ENCODE measurements at regions of chr3 and their contacts with region 1.

Region 1: GRCh38 chr3:122609798-122610559 is 32.5 kb downstream of the PARP15 start:
- DNase-seq: no peak
- ATAC-seq: peak; percentile 80
- H3K4me3 ChIP-seq: no peak overlapping the region
- H3K4me3 Mint-ChIP-seq: peak overlapping the region; percentile 73
- H3K27ac ChIP-seq: peak overlapping the region in 1 of 2 donors; percentile 78
- H3K27ac Mint-ChIP-seq: peak overlapping the region; percentile 86
- H3K4me1 ChIP-seq: peaks cover 8 to 15% of the 10 kb centered on the region in 2 donors
- H3K4me1 Mint-ChIP-seq: peaks cover 27% of the 10 kb centered on the region
- H3K27me3 ChIP-seq: no peaks in the 10 kb centered on the region
- H3K27me3 Mint-ChIP-seq: no peaks in the 10 kb centered on the region
- CTCF ChIP-seq: no peak

Region 2: GRCh38 chr3:122200661-122201060 is 409.3 kb before region 1 on chr3:
- CTCF ChIA-PET with region 1: no interaction called
- POLR2A ChIA-PET with region 1: no interaction called
- intact Hi-C with region 1: no loop called
- DNase-seq: no peak
- ATAC-seq: no peak
- H3K4me3 ChIP-seq: no peak overlapping the region
- H3K4me3 Mint-ChIP-seq: no peak overlapping the region
- H3K27ac ChIP-seq: no peak overlapping the region
- H3K27ac Mint-ChIP-seq: no peak overlapping the region
- H3K4me1 ChIP-seq: no peaks in the 10 kb centered on the region
- H3K4me1 Mint-ChIP-seq: no peaks in the 10 kb centered on the region
- H3K27me3 ChIP-seq: no peaks in the 10 kb centered on the region
- H3K27me3 Mint-ChIP-seq: no peaks in the 10 kb centered on the region
- CTCF ChIP-seq: no peak

Region 3: DNA sequence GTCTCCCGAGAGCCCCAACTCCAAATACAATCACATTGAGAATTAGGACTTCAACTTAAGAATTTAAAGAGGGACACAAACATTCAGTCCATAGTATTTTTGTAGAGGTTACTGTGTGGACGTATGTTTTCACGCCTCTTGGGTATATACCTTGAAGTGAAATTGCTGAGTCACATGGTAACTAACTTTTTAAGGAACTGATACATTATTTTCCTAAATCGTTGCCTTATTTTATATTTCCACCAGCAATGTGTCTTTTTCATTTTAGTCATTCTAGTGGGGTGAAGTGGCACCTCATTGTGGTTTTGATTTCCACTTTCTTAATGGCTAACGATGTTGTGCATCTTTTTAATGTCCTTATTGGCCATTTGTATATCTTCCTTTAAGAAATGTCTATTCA is 20.7 kb before region 1 on chr3:
- CTCF ChIA-PET with region 1: no interaction called
- POLR2A ChIA-PET with region 1: no interaction called
- intact Hi-C with region 1: loop called (anchors 2 kb)
- DNase-seq: peak; percentile 42
- ATAC-seq: peak; percentile 40
- H3K4me3 ChIP-seq: no peak overlapping the region
- H3K4me3 Mint-ChIP-seq: peak overlapping the region; percentile 46
- H3K27ac ChIP-seq: peak overlapping the region; percentile 22 to 76
- H3K27ac Mint-ChIP-seq: peak overlapping the region; percentile 85
- H3K4me1 ChIP-seq: peaks cover 36 to 40% of the 10 kb centered on the region in 2 donors
- H3K4me1 Mint-ChIP-seq: peaks cover 68% of the 10 kb centered on the region
- H3K27me3 ChIP-seq: no peaks in the 10 kb centered on the region
- H3K27me3 Mint-ChIP-seq: no peaks in the 10 kb centered on the region
- CTCF ChIP-seq: no peak

Region 4: DNA sequence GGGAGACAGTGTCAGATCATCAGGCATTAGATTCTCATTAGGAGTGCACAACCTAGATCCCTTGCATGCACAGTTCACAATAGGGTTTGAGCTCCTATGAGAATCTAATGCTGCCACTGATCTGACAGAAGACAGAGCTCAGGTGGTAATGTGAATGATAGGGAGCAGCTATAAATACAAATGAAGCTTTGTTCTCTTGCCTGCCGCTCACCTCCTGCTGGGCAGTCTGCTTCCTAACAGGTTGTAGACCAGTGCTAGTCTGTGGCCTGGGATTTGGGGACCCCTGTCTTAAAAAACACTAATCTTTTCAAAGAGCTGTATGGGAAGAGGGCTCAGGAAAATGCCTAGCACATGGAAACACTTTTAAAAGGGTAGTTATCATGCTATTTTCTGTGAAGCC is 19.8 kb after region 1 on chr3:
- CTCF ChIA-PET with region 1: no interaction called
- POLR2A ChIA-PET with region 1: no interaction called
- intact Hi-C with region 1: no loop called
- DNase-seq: no peak
- ATAC-seq: no peak
- H3K4me3 ChIP-seq: no peak overlapping the region
- H3K4me3 Mint-ChIP-seq: no peak overlapping the region
- H3K27ac ChIP-seq: no peak overlapping the region
- H3K27ac Mint-ChIP-seq: no peak overlapping the region
- H3K4me1 ChIP-seq: no peaks in the 10 kb centered on the region
- H3K4me1 Mint-ChIP-seq: peaks cover 15% of the 10 kb centered on the region
- H3K27me3 ChIP-seq: no peaks in the 10 kb centered on the region
- H3K27me3 Mint-ChIP-seq: no peaks in the 10 kb centered on the region
- CTCF ChIP-seq: no peak

Measured in B cell (primary cell).